Gastrocnemius medialis (tissue), 4 donors: ENCODE measurements at regions of chr21 and their contacts with region 1.

Region 1: DNA sequence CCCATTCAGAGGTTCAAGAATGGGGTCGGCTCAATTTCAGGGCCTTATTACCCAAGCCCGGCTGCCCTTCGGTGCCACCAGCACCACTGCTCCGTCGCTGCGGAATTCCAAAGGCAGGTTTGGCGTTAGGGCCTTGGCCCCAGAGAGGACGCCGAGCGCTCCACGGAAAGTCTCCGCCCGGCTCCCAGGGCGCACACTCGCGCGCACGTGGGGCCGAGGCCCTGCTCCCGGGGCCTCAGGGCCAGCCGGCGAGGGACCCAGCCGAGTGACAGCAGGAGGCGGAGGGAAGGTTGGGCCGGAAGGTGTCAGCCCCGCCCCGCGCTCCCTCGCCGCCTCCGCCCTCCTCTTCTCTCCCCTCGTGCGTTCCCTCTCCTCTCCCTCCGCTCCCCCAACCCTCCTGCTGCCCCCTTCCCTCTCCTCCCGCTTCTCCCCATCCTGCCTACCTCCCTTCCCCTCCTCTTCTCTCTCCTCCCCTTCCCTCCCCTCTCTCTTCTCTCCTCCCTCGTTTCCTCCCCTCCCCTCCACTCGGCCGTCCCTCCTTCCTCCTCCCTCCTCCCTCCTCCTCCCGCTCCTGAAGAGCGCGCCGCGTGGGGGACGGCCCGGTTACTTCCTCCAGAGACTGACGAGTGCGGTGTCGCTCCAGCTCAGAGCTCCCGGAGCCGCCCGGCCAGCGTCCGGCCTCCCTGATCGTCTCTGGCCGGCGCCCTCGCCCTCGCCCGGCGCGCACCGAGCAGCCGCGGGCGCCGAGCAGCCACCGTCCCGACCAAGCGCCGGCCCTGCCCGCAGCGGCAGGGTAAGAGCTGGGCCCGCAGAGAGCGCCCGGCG is at the start of gene ETS2:
- DNase-seq: peak; percentile 89 to 90
- ATAC-seq: peak; percentile 87 to 89
- H3K4me3 ChIP-seq: peak within 1 kb of the TSS; percentile 74 to 94 (median 84)
- H3K27ac ChIP-seq: peak within 1 kb of the TSS; percentile 92 to 98 (median 97)
- H3K4me1 ChIP-seq: peaks cover 15 to 26% of the 10 kb centered on the region in 2 donors
- H3K27me3 ChIP-seq: no peaks in the 10 kb centered on the region
- CTCF ChIP-seq: peak in 2 of 5 experiments; percentile 24 to 30
- POLR2A ChIP-seq: peak; percentile 91 to 95
- total RNA-seq, gene ETS2: 51.5 to 136 (median 59.3) TPM

Region 2: DNA sequence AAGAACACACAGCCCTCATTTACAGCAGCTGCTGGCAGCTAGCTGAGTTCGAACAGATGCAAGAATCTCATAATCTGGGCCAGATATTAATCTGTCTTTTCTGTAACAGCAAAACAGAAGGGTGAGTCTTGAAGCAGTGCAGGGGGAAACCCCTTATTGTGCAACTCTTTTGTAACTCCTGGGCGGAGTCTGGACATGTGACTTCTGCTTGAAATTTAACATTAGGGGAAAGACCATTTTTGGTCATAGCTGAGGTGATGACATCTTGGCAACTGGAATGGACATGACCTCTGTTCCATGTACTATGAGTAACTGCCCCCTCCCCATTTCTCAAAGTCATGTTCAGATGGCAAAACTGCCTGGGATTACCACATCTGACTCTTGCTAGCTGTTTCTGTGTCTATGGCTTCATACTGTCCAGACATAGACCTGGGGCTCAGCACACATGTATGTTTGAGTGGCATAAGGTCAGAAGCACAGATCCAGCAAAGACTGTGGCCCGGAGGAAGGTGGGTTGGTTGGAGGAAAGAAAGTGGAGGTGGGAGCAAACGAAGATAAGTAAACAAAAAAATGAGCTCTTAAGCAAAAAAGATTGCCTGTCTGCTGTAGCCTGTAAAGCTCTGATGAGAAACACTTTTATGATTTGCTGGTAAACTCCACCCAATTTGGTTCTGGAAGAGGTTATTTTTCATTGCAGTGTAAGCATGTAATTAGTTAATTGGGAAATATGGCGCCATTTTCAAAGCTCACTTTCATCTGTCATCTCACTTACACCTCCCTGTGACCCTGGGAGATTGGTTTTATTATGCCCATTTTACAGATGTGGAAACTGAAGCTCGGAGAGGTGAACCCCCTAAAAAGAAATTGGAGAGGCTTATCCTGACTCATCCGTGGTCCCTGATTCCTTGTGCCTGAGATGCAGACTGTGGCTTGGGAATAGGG is 26.3 kb after region 1 on chr21:
- in situ Hi-C with region 1: no loop called
- intact Hi-C with region 1: loop called (anchors 1 kb)
- DNase-seq: peak; percentile 70 to 83
- ATAC-seq: peak; percentile 91 to 93
- H3K4me3 ChIP-seq: no peak overlapping the region
- H3K27ac ChIP-seq: peak overlapping the region; percentile 12 to 57 (median 28)
- H3K4me1 ChIP-seq: peaks cover 6 to 9% of the 10 kb centered on the region in 2 donors
- H3K27me3 ChIP-seq: no peaks in the 10 kb centered on the region
- CTCF ChIP-seq: no peak
- POLR2A ChIP-seq: no peak

Region 3: DNA sequence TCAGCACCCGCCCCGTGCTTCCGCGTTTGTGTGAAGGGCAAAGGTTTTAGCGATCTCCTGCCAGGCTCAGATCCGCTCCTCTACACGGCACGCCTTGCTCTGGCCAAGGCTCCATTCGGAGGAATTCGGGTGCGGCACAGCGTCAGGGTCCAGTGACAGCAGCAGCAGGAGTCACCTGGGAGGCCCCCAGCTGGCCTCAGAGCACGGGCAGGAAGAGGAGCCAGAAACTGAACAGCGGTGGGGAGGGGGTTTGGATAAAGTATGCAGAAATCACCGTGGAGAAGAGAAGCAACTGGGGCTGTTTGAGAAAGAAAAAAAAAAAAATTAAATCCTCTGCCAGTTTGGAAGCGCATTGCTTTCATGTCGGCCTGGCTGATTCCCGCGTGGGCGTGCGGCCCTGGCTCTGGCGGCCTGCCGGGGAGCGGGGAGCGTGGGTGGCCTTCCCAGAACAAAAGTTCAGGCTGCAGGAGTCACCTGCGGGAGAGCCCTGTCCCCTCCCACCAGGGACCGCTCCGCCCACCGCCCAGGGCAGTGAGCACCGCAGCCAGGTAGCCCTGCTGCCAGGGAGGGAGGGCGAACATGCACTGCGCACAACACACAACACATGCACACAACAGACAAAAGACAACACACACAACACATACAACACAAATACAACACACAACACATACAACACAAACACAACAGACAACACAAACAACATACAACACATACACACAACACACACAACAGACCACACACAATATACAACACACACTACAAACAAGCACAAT is 107.8 kb after region 1 on chr21:
- in situ Hi-C with region 1: loop called in 1 of 4 experiments (anchors 10 kb)
- intact Hi-C with region 1: loop called (anchors 5 kb)
- DNase-seq: peak; percentile 52 to 83
- ATAC-seq: peak; percentile 54 to 81
- H3K4me3 ChIP-seq: peak overlapping the region; percentile 28 to 45 (median 30)
- H3K27ac ChIP-seq: peak overlapping the region; percentile 88 to 95 (median 92)
- H3K4me1 ChIP-seq: peaks cover 38 to 55% of the 10 kb centered on the region in 2 donors
- H3K27me3 ChIP-seq: no peaks in the 10 kb centered on the region
- CTCF ChIP-seq: no peak
- POLR2A ChIP-seq: peak; percentile 19 to 28

Region 4: GRCh38 chr21:38985568-38986378 is 180.2 kb after region 1 on chr21:
- in situ Hi-C with region 1: loop called in 1 of 4 experiments (anchors 25 kb)
- intact Hi-C with region 1: loop called (anchors 2 kb)
- DNase-seq: peak; percentile 47 to 65
- ATAC-seq: peak; percentile 25 to 35
- H3K4me3 ChIP-seq: no peak overlapping the region
- H3K27ac ChIP-seq: peak overlapping the region; percentile 39 to 70 (median 66)
- H3K4me1 ChIP-seq: peaks cover 68 to 70% of the 10 kb centered on the region in 2 donors
- H3K27me3 ChIP-seq: no peaks in the 10 kb centered on the region
- CTCF ChIP-seq: no peak
- POLR2A ChIP-seq: no peak

Region 5: DNA sequence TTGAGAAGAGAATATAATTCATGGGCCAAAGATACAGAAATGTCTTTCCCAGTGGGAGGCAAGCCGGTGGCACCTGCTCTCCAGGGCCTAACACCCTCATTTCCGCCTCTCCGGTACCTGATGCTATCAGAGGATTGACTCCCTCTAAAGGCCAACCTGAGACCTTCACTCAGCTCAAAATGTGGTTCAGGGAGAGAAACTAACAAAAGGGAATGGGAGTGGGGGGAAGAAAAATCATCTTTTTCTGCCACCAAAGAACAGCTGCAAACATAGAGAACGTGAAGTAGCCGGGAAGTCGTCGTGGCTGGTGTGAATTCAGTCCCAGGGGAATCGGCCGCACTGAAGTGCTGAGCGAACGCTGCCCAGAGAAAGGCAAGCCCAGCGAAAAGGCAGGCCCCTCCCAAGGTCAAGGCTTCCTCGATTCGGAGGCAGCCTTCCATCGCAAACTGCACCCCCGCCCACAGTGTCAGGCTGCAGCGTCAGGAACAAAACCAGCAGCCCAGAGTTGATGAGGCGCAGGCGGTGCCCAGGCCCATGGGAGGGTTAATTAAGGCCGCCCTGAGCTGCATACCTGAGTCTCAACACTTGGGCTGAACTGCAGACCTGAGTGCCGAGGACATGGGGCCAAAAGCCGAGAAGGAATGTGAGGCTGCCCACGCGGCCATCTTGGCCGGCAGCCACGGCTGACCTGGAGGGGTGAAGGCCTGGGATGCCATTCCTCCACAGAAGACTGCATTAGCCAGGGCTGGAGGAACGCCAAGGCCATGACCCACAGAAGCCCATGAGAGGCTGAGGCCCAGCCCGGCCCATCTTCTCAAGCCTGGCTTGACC is 217.5 kb after region 1 on chr21:
- in situ Hi-C with region 1: loop called in 1 of 4 experiments (anchors 10 kb)
- intact Hi-C with region 1: loop called (anchors 2 kb)
- DNase-seq: peak in 1 of 2 donors; percentile 32
- ATAC-seq: peak; percentile 80 to 83
- H3K4me3 ChIP-seq: peak overlapping the region in 2 of 4 donors; percentile 4 to 28
- H3K27ac ChIP-seq: peak overlapping the region; percentile 63 to 73 (median 69)
- H3K4me1 ChIP-seq: peaks cover 10 to 14% of the 10 kb centered on the region in 2 donors
- H3K27me3 ChIP-seq: no peaks in the 10 kb centered on the region
- CTCF ChIP-seq: peak in 4 of 5 experiments; percentile 28 to 46 (median 44)
- POLR2A ChIP-seq: no peak

Region 6: GRCh38 chr21:39125752-39126485 is 320.4 kb after region 1 on chr21:
- in situ Hi-C with region 1: loop called (anchors 5 to 10 kb)
- intact Hi-C with region 1: loop called (anchors 1 kb)
- DNase-seq: peak in 1 of 2 donors; percentile 46
- ATAC-seq: peak; percentile 91 to 99
- H3K4me3 ChIP-seq: no peak overlapping the region
- H3K27ac ChIP-seq: peak overlapping the region in 2 of 4 donors; percentile 9 to 39
- H3K4me1 ChIP-seq: peaks cover 6 to 9% of the 10 kb centered on the region in 2 donors
- H3K27me3 ChIP-seq: no peaks in the 10 kb centered on the region
- CTCF ChIP-seq: peak; percentile 54 to 67 (median 65)
- POLR2A ChIP-seq: no peak

Region 7: GRCh38 chr21:39313571-39314142 is 508.1 kb after region 1 on chr21 and contains the start of gene BRWD1:
- in situ Hi-C with region 1: no loop called
- intact Hi-C with region 1: loop called (anchors 5 kb)
- DNase-seq: peak; percentile 70 to 75
- ATAC-seq: peak; percentile 73
- H3K4me3 ChIP-seq: peak within 1 kb of the TSS; percentile 87 to 99 (median 96)
- H3K27ac ChIP-seq: peak within 1 kb of the TSS; percentile 91 to 99 (median 98)
- H3K4me1 ChIP-seq: peaks cover 14 to 15% of the 10 kb centered on the region in 2 donors
- H3K27me3 ChIP-seq: no peaks in the 10 kb centered on the region
- CTCF ChIP-seq: peak in 4 of 5 experiments; percentile 38 to 68 (median 52)
- POLR2A ChIP-seq: peak; percentile 77 to 80
- total RNA-seq, gene BRWD1: 42.2 to 65.7 (median 50.4) TPM